GM13977 (cell line): ENCODE measurements at regions of chr1 and their contacts with region 1.

Region 1: GRCh38 chr1:58816072-58816746 is 32.4 kb upstream of the JUN start:
- DNase-seq: peak; percentile 95
- CTCF ChIP-seq: peak; percentile 41

Region 2: DNA sequence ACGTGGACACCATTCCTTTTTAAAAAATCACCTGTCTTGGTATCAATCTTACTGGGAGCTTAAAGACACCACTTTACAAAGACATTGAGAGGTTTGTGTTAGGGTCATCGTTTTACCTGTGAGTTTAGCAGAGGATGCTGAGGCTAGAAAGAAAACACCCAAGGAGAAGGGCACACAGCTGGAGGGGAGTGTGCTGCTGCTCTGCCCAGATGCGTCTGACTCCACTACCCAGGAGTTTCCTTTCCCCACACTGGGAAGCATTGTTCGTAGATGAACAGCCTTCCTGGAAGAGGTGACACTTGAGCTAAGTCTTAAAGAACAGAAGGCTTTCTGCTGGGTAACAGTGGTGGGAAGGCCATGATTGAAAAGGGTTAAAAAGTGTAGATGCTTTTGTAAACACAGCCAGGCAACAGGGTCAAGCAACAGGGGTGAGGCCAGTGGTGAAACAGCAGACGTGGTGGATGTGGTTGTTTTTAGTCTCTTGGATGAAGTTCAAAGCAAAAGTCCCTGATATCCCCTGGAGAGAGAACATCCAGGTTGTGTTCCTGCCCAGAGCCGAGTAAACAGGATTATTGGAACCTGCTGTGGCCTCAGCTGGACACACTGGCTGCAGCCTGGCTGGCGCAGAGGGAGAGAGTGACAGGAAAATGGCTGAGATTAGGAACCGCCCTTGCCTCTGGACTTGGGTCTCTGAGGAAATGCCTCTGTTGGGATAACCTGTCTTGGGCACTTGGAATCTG is 166.2 kb after region 1 on chr1:
- in situ Hi-C with region 1: no loop called
- DNase-seq: no peak
- CTCF ChIP-seq: no peak

Region 3: DNA sequence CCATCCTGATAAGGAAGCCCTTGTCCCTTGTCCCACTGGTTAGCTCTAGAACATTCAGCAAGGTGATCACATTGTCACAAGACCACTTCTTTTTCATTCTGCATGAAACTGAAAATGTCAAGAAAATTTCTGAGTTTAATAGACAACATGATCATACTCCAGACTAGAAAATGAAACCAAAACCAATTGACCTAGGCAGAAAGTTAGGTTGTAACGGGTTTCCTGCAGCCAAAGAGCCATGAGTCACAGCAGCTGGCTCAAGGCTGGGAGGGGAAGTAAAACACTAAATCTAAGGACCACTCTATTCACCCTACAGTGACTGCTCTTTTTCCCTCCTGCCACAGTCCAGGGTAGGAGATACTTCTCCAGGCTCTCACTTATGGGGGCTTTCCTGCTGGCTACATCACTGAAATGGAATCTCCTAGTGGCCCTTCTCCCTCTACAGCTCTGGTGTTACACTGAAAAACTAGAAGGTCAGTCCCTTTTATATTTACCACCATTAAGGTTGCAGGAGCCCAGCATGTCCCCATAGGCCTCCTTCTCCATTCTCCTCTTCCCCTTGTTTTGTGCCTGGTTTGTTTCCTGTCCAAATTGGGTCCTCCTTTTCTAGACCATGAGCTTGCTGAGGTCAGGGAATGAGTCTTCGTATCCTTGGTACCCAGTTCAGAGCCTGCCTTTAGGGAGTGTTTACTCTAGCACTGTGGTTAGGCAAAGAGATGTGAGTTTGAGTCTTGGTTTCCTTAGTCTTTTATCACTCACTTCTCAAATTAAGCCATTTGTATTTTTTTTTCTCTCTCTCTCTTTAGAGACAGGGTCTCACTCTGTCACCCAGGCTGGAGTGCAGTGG is 204.2 kb after region 1 on chr1:
- in situ Hi-C with region 1: loop called (anchors 25 kb)
- DNase-seq: peak; percentile 60
- CTCF ChIP-seq: no peak

Region 4: GRCh38 chr1:59034925-59035324 is 218.7 kb after region 1 on chr1:
- in situ Hi-C with region 1: no loop called
- DNase-seq: no peak
- CTCF ChIP-seq: no peak